ENCODE measurements at regions of chr14 and their contacts with region 1.

Region 1: GRCh38 chr14:20855652-20856291 is 35.4 kb upstream of the RNASE3 start:
- DNase-seq: peak; percentile 80 to 93 (median 93)
- H3K4me3 ChIP-seq: no peak overlapping the region
- H3K27ac ChIP-seq: no peak overlapping the region
- H3K4me1 ChIP-seq: peaks cover 0 to 2% (median 0%) of the 10 kb centered on the region in 4 experiments
- H3K27me3 ChIP-seq: peaks cover 0 to 3% (median 0%) of the 10 kb centered on the region in 5 experiments

Region 2: DNA sequence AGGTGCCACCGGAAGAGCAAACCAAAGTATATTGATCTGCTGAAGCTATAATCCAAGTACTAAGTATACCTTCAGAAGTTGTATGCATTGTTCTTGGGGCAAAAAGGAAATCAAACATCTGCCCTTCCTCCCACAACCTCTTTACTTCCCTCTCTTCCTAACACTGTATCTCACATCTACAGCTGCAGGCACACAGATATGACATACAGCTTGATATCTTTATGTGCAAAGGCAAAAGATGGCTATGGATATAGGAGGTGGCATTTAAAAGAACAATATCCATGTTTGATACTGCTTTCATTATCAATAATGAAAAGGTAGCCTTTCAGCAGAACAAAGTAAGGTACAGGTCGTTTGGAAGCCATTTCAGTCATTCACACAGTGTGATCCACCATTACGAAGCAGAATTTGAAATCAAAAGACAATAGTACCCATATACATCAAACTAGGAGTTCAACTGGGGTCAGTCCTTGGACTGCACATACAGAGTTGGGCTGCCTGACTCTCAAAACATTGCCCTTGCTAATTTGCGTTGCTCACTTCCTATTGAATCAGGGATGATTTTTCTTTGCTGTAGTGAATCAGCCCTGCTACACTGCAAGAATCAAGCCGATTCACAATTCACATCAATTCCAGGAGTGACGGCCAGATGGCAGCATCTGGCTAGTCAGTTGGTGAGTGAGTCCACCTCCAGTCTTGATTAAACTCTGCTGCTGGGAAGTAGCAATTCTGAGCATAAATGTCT is 158.3 kb before region 1 on chr14:
- CTCF ChIA-PET with region 1: interaction called, 73 read pairs
- POLR2A ChIA-PET with region 1: no interaction called
- DNase-seq: peak; percentile 75 to 87 (median 81)
- H3K4me3 ChIP-seq: peak overlapping the region in 1 of 7 experiments; percentile 27
- H3K27ac ChIP-seq: no peak overlapping the region
- H3K4me1 ChIP-seq: peaks cover 0 to 7% (median 5%) of the 10 kb centered on the region in 4 experiments
- H3K27me3 ChIP-seq: no peaks in the 10 kb centered on the region

Region 3: DNA sequence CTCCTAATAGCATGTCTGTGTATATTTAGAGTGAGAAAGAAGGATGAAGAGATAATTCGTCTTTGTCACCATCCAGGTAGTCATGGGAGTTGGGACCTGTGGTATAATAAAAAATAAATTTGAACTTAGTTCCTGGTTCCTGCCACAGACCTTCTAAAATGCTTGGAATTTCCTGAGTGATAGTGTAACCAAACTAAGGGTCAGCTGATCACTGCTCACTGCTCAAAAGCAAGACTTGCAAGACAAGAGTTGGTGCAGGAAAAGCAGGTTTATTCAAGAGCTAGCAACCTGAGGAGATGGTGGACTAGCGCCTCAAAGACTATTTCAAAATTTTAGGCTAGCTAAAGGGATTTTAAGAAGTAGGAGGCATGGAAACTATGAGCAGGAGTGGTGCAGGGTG is 148.2 kb before region 1 on chr14:
- CTCF ChIA-PET with region 1: interaction called, 16 read pairs
- POLR2A ChIA-PET with region 1: no interaction called
- DNase-seq: no peak
- H3K4me3 ChIP-seq: no peak overlapping the region
- H3K27ac ChIP-seq: no peak overlapping the region
- H3K4me1 ChIP-seq: no peaks in the 10 kb centered on the region
- H3K27me3 ChIP-seq: peaks cover 0 to 2% (median 0%) of the 10 kb centered on the region in 5 experiments

Region 4: DNA sequence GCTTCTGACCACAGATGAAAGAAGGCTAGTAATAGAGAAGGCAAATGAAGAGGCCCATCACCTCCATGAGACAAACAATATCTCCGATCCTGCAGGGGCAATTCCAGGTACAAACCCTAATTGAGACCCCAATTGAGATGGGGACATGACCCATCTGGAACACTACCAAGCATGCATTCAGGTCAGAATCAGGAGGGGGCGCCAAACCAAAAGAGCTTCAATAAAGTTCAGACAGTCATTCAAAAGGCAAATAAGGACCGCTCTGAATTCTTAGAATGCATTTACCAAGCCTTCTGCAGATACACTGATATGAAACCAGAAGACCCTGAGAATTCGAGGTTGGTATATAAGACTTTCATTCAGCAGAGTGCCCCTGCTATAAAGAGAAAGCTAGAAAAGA is 97.8 kb before region 1 on chr14:
- CTCF ChIA-PET with region 1: interaction called, 35 read pairs
- POLR2A ChIA-PET with region 1: no interaction called
- DNase-seq: peak; percentile 45 to 67 (median 59)
- H3K4me3 ChIP-seq: no peak overlapping the region
- H3K27ac ChIP-seq: no peak overlapping the region
- H3K4me1 ChIP-seq: peaks cover 0 to 8% (median 0%) of the 10 kb centered on the region in 4 experiments
- H3K27me3 ChIP-seq: no peaks in the 10 kb centered on the region

Region 5: GRCh38 chr14:20836668-20837338 is 19.0 kb before region 1 on chr14:
- CTCF ChIA-PET with region 1: no interaction called
- POLR2A ChIA-PET with region 1: no interaction called
- DNase-seq: no peak
- H3K4me3 ChIP-seq: no peak overlapping the region
- H3K27ac ChIP-seq: no peak overlapping the region
- H3K4me1 ChIP-seq: no peaks in the 10 kb centered on the region
- H3K27me3 ChIP-seq: no peaks in the 10 kb centered on the region

Region 6: GRCh38 chr14:20866963-20867362 is 11.2 kb after region 1 on chr14:
- CTCF ChIA-PET with region 1: interaction called, 83 read pairs
- POLR2A ChIA-PET with region 1: interaction called, 3 read pairs
- DNase-seq: peak; percentile 15 to 35 (median 18)
- H3K4me3 ChIP-seq: no peak overlapping the region
- H3K27ac ChIP-seq: no peak overlapping the region
- H3K4me1 ChIP-seq: no peaks in the 10 kb centered on the region
- H3K27me3 ChIP-seq: no peaks in the 10 kb centered on the region

Region 7: DNA sequence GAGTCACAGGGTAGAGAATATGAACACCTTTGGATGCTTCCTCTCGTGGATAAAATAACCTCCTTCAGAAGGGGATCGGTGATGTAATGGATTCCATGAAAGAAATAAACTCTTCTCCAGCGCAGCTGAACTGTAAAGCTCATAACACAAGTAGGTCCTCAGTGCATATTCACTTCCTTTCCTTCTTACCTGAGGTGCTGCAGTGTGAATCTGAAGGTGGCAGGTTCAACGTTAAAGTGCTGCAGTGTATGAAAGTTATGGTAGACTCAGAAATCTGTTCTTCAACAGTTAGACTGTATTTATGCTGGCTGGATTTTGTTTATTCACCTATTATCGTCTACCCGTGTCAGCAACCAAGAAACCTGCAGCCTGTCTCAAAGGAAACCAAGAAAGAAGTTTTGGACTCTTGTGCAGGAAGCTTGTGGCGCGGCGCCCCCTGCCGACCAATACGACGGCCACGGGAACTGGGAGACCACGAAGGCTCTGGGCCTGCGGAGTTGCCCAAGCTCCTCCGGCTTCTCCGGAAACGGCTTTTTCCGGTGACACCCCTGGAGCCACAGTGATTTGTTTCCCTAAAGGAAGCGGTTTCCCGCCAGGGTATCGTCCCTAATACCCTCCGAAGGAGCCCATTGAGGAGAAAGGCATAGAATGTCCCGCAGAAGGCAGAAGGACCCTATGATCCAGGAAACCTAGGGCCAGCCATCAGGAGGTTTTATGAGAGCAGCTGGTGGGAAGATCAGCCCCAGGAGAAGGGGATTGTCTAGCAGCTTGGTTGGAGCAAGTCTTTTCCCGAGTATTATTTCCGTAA is 17.8 kb after region 1 on chr14:
- CTCF ChIA-PET with region 1: interaction called, 83 read pairs
- POLR2A ChIA-PET with region 1: interaction called, 3 read pairs
- DNase-seq: peak; percentile 77 to 86 (median 83)
- H3K4me3 ChIP-seq: peak overlapping the region in 1 of 7 experiments; percentile 45
- H3K27ac ChIP-seq: no peak overlapping the region
- H3K4me1 ChIP-seq: peaks cover 5 to 12% (median 9%) of the 10 kb centered on the region in 4 experiments
- H3K27me3 ChIP-seq: no peaks in the 10 kb centered on the region

Region 8: GRCh38 chr14:20970983-20971704 is 115.4 kb after region 1 on chr14:
- CTCF ChIA-PET with region 1: interaction called, 92 read pairs
- POLR2A ChIA-PET with region 1: no interaction called
- DNase-seq: peak; percentile 81 to 88 (median 88)
- H3K4me3 ChIP-seq: peak overlapping the region; percentile 47 to 92 (median 79)
- H3K27ac ChIP-seq: no peak overlapping the region
- H3K4me1 ChIP-seq: peaks cover 0 to 14% (median 11%) of the 10 kb centered on the region in 4 experiments
- H3K27me3 ChIP-seq: peaks cover 0 to 2% (median 0%) of the 10 kb centered on the region in 5 experiments